ENCODE measurements at regions of chr1 and their contacts with region 1.

Region 1: DNA sequence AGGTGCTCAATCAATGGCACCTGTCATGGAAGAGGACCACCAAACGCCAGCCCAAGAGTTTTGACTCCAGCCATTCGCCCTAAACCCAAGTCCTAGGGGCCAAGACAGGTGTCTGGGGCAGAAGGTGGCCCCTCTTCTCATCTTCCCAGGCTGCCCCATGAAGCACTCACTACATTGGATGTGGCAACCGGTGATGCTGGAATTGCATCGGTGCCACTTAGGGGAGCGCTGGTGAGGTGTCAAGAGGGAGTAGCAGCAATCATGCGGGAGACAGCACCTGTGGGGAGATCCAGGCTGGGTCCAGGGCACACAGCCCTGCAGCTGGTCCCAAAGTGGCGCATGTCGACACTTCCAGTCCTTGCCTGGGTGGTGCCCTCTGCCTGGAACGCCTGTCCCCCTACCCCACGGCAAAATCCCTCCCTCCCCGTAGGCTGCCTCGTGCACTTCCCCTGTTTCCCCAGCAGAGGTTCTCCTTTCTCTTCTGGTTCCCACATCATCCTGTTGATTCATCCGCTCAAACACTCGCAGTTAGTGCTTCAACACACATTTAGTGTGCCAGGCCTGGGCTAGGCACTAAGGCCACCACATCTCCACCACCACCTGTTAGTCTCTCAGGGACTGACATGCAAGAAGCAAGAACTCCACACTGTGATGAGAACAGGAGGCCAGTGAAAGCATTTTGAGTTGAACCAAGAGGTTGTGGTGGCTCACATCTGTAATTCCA is 18.5 kb downstream of the PLA2G2D start:
- DNase-seq: peak; percentile 28 to 44
- ATAC-seq: peak; percentile 63 to 87 (median 79)
- H3K4me3 ChIP-seq: no peak overlapping the region
- H3K27ac ChIP-seq: no peak overlapping the region
- H3K4me1 ChIP-seq: peaks cover 0 to 13% (median 0%) of the 10 kb centered on the region in 9 donors
- H3K27me3 ChIP-seq: no peaks in the 10 kb centered on the region
- CTCF ChIP-seq: peak; percentile 65 to 86 (median 78)

Region 2: DNA sequence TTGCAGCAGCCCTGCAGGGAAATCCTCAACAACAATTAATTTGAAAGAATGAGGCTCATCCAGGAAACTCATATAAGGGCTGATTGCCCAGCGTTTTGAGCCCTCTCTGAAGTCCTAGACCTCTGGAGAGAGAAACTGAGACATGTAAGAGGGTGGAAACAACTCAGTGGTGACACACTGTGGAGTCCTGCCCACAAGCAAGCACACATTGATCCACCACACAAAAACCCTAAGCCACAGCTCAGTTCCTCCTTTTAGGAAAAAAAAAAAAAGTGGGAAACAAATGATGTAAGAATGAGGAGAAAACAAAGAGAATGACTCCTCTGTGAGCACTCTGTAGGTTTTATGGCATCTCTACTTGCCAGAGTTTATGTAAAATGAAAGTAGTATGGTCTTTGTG is 53.7 kb before region 1 on chr1:
- intact Hi-C with region 1: no loop called
- DNase-seq: no peak
- ATAC-seq: peak in 1 of 8 donors; percentile 33
- H3K4me3 ChIP-seq: no peak overlapping the region
- H3K27ac ChIP-seq: peak overlapping the region in 4 of 10 donors; percentile 9 to 47 (median 23)
- H3K4me1 ChIP-seq: peaks cover 0 to 9% (median 0%) of the 10 kb centered on the region in 9 donors
- H3K27me3 ChIP-seq: peaks cover 0 to 5% (median 0%) of the 10 kb centered on the region in 7 donors
- CTCF ChIP-seq: peak in 1 of 9 donors; percentile 14

Region 3: GRCh38 chr1:20151906-20152598 is 51.3 kb after region 1 on chr1:
- intact Hi-C with region 1: loop called in 9 of 10 experiments (anchors 1 to 5 kb)
- DNase-seq: peak; percentile 83 to 87
- ATAC-seq: peak; percentile 89 to 96 (median 93)
- H3K4me3 ChIP-seq: peak overlapping the region; percentile 1 to 53 (median 44)
- H3K27ac ChIP-seq: peak overlapping the region in 4 of 10 donors; percentile 29 to 73 (median 48)
- H3K4me1 ChIP-seq: peaks cover 3 to 27% (median 15%) of the 10 kb centered on the region in 9 donors
- H3K27me3 ChIP-seq: peaks cover 0 to 20% (median 0%) of the 10 kb centered on the region in 7 donors
- CTCF ChIP-seq: peak; percentile 91 to 97 (median 95)

Region 4: GRCh38 chr1:20194757-20195461 is 94.1 kb after region 1 on chr1:
- intact Hi-C with region 1: loop called in 2 of 10 experiments (anchors 2 kb)
- DNase-seq: peak; percentile 60 to 76
- ATAC-seq: peak; percentile 72 to 82 (median 76)
- H3K4me3 ChIP-seq: peak overlapping the region in 1 of 10 donors; percentile 32
- H3K27ac ChIP-seq: no peak overlapping the region
- H3K4me1 ChIP-seq: peaks cover 0 to 21% (median 4%) of the 10 kb centered on the region in 9 donors
- H3K27me3 ChIP-seq: peaks cover 0 to 35% (median 13%) of the 10 kb centered on the region in 7 donors
- CTCF ChIP-seq: peak; percentile 51 to 90 (median 82)

Region 5: GRCh38 chr1:20302093-20302471 is 201.3 kb after region 1 on chr1:
- intact Hi-C with region 1: loop called in 1 of 10 experiments (anchors 10 kb)
- DNase-seq: peak; percentile 16 to 48
- ATAC-seq: peak in 7 of 8 donors; percentile 57 to 96 (median 72)
- H3K4me3 ChIP-seq: no peak overlapping the region
- H3K27ac ChIP-seq: no peak overlapping the region
- H3K4me1 ChIP-seq: peaks cover 0 to 6% (median 0%) of the 10 kb centered on the region in 9 donors
- H3K27me3 ChIP-seq: peaks cover 0 to 3% (median 0%) of the 10 kb centered on the region in 7 donors
- CTCF ChIP-seq: no peak